ENCODE measurements at regions of chr6 and their contacts with region 1.

Region 1: DNA sequence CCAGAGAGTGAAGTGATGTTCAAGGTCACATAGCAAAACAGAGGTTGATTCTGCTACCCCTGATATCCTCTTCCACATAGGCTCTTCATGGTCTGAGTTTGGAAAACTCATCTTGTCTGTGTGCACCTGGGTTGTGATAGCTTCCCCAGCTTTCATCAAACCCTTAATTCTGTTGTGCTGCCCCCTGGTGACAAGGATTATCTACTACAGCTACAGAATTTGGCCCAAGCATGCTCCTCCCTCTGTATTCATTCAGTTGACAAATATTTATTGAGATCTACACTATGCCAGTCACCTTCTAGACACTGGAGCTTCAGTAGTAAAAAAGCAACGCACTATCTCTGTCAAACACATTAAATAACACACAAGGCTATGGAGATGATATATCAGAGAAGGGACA is 50.4 kb downstream of the SMPDL3A start:
- DNase-seq: peak in 5 of 10 donors; percentile 21 to 74 (median 51)
- H3K4me3 ChIP-seq: no peak overlapping the region
- H3K27ac ChIP-seq: peak overlapping the region in 1 of 59 donors; percentile 13
- H3K27me3 ChIP-seq: no peaks in the 10 kb centered on the region
- CTCF ChIP-seq: peak; percentile 54 to 84 (median 73)

Region 2: GRCh38 chr6:121680058-121680457 is 1159.4 kb before region 1 on chr6:
- intact Hi-C with region 1: no loop called
- DNase-seq: no peak
- H3K4me3 ChIP-seq: no peak overlapping the region
- H3K27ac ChIP-seq: no peak overlapping the region
- H3K27me3 ChIP-seq: peaks cover 0 to 2% (median 0%) of the 10 kb centered on the region in 45 donors
- CTCF ChIP-seq: no peak

Region 3: DNA sequence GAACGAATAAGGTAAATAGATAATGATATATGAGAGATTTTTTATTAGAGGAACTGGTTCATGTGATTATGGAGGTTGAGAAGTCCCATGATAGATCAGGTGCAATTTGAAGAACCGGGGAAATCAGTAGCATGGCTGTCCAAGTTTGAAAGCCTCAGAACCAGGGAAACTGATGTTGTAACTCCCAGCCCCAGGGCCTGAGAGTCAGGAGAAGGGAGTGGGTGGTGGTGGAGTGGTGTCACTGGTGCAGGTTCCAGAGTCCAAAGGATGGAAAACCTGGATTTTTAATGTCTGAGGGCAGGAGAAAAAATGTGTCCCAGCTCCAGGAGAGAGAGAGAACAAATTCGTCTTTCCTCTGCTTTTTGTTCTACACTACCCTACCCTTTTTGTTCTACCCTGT is 861.9 kb before region 1 on chr6:
- intact Hi-C with region 1: no loop called
- DNase-seq: no peak
- H3K4me3 ChIP-seq: no peak overlapping the region
- H3K27ac ChIP-seq: no peak overlapping the region
- H3K27me3 ChIP-seq: no peaks in the 10 kb centered on the region
- CTCF ChIP-seq: no peak

Region 4: GRCh38 chr6:122449069-122449468 is 390.4 kb before region 1 on chr6:
- intact Hi-C with region 1: no loop called
- DNase-seq: no peak
- H3K4me3 ChIP-seq: no peak overlapping the region
- H3K27ac ChIP-seq: no peak overlapping the region
- H3K27me3 ChIP-seq: no peaks in the 10 kb centered on the region
- CTCF ChIP-seq: no peak

Region 5: DNA sequence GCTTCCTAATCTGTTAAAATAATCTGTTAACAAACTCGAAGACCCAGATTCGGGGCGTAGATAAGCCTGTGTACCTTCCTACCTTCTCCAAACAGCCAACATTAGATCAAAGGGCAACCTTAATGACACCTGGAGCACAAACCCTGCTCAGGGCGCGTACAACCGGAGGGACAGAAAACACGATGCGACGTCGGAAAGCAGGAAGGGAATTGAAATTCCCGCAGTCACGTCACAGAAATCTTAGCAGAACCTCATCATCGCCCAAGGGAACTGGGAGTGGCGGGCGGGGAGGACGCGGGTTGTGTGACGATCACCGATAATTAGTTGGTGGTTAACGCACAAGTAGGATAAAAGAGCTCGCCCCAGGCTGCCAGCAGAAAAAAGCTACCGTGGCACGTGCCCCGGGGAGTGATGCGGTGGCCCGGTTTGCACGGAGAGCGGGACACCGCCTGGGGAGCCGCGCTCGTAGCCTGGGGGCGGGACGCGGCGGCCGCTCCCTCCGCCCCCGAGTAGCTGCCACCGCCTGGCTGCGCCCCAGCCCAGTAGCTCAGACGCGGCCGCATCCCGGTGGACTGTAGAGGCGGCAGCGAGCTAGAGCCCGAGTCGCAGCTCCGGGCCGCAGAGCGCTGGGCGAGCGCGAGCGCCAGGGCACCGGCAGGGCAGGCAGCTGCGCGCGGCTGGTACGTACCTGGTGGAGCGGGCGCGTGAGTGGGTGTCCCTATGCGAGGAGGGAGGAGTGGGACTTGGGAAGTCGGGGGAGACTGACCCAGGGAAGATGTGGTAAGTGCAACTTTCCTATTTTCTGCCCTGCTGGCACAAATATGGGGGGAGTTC is 229.4 kb before region 1 on chr6 and contains the start of gene PKIB:
- intact Hi-C with region 1: loop called in 1 of 2 experiments (anchors 10 kb)
- DNase-seq: peak; percentile 50 to 92 (median 67)
- H3K4me3 ChIP-seq: peak within 1 kb of the TSS; percentile 42 to 90 (median 70)
- H3K27ac ChIP-seq: peak within 1 kb of the TSS in 7 of 59 donors; percentile 6 to 71 (median 7)
- H3K27me3 ChIP-seq: peaks cover 0 to 10% (median 0%) of the 10 kb centered on the region in 45 donors
- CTCF ChIP-seq: peak in 46 of 56 donors; percentile 6 to 62 (median 36)
- total RNA-seq, gene PKIB: 1.0 to 8.9 (median 4.3) TPM

Region 6: DNA sequence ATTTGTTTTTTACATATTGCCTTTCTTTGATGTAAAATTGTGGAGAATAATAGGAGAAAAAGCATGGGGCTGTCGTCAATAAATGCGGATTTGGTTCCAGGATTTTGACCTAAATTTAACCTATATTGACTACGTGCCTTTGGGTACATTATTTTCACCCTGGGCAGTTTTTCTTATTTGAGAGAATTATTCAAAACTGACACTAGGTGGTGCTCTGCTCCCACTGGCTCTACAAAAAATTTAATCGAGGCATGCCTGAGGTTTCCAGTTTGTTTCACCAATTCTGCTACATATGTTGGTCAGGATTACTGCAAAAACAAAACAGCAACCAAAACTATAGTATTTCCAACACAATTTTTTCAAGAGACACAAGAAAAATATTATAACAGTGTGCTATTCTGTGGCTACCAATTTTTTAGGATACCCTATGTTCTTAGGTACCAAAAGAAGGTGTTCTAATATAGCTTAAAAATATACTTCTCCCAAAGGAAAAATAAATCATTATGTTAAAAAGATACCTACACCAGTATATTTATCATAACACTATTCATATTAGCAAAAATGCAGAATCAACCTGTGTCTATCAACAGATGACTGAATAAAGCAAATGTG is 108.6 kb before region 1 on chr6:
- intact Hi-C with region 1: loop called in 1 of 2 experiments (anchors 5 kb)
- DNase-seq: peak in 1 of 10 donors; percentile 46
- H3K4me3 ChIP-seq: peak overlapping the region in 5 of 59 donors; percentile 3 to 27 (median 14)
- H3K27ac ChIP-seq: peak overlapping the region in 1 of 59 donors; percentile 66
- H3K27me3 ChIP-seq: no peaks in the 10 kb centered on the region
- CTCF ChIP-seq: peak; percentile 74 to 95 (median 86)

Region 7: GRCh38 chr6:122740936-122741335 is 98.5 kb before region 1 on chr6:
- intact Hi-C with region 1: loop called (anchors 5 kb)
- DNase-seq: no peak
- H3K4me3 ChIP-seq: no peak overlapping the region
- H3K27ac ChIP-seq: no peak overlapping the region
- H3K27me3 ChIP-seq: no peaks in the 10 kb centered on the region
- CTCF ChIP-seq: no peak

Region 8: GRCh38 chr6:122749451-122750050 is 89.9 kb before region 1 on chr6:
- intact Hi-C with region 1: loop called (anchors 5 kb)
- DNase-seq: no peak
- H3K4me3 ChIP-seq: no peak overlapping the region
- H3K27ac ChIP-seq: no peak overlapping the region
- H3K27me3 ChIP-seq: no peaks in the 10 kb centered on the region
- CTCF ChIP-seq: no peak

Region 9: DNA sequence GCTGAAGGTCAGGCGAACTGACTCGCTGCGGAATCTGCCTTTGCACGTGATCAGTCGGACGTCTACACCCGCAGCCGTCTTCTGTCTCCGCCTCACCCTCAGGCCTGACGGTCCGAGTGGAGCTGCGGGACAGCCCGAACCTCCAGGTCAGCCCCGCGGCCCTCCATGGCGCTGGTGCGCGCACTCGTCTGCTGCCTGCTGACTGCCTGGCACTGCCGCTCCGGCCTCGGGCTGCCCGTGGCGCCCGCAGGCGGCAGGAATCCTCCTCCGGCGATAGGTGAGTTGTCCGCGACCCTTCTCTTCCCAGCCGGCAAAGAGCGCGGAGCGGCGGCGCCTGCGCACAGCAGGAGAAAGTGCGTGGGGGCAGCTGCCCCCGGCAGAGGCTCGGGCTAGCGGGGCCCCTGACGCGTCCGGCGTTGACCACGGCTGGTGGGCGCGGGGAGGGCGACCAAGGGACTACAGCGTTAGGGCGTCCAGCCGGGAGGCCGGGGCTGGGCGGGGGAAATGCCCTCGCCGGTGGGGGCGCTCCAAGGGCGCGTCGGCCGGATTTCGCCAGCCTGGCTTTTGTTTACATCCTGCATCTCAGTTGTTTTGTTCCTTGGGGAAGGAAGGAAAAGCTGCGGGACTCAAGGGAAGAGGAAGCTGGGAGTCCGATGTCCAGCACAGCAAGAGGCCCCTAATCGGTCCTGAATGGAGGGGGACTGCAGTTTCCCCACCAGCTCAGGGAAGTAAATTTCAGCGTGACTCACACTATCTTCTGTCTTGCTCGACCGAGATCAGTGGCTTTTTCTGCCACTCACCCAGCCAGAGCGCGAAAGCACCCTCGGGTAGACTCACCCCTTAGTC is 50.1 kb before region 1 on chr6 and contains the start of gene SMPDL3A:
- intact Hi-C with region 1: loop called (anchors 2 kb)
- DNase-seq: peak; percentile 65 to 86 (median 76)
- H3K4me3 ChIP-seq: peak within 1 kb of the TSS; percentile 58 to 94 (median 81)
- H3K27ac ChIP-seq: peak within 1 kb of the TSS; percentile 56 to 99 (median 96)
- H3K27me3 ChIP-seq: no peaks in the 10 kb centered on the region
- CTCF ChIP-seq: peak in 55 of 56 donors; percentile 33 to 80 (median 57)
- total RNA-seq, gene SMPDL3A: 2.8 to 12.6 (median 8.1) TPM

Region 10: GRCh38 chr6:122799913-122800686 is 39.4 kb before region 1 on chr6:
- intact Hi-C with region 1: no loop called
- DNase-seq: no peak
- H3K4me3 ChIP-seq: no peak overlapping the region
- H3K27ac ChIP-seq: no peak overlapping the region
- H3K27me3 ChIP-seq: no peaks in the 10 kb centered on the region
- CTCF ChIP-seq: no peak

Measured in dorsolateral prefrontal cortex (tissue), 120 donors.